WTC11 (cell line): ENCODE measurements at regions of chr5 and their contacts with region 1.

Region 1: DNA sequence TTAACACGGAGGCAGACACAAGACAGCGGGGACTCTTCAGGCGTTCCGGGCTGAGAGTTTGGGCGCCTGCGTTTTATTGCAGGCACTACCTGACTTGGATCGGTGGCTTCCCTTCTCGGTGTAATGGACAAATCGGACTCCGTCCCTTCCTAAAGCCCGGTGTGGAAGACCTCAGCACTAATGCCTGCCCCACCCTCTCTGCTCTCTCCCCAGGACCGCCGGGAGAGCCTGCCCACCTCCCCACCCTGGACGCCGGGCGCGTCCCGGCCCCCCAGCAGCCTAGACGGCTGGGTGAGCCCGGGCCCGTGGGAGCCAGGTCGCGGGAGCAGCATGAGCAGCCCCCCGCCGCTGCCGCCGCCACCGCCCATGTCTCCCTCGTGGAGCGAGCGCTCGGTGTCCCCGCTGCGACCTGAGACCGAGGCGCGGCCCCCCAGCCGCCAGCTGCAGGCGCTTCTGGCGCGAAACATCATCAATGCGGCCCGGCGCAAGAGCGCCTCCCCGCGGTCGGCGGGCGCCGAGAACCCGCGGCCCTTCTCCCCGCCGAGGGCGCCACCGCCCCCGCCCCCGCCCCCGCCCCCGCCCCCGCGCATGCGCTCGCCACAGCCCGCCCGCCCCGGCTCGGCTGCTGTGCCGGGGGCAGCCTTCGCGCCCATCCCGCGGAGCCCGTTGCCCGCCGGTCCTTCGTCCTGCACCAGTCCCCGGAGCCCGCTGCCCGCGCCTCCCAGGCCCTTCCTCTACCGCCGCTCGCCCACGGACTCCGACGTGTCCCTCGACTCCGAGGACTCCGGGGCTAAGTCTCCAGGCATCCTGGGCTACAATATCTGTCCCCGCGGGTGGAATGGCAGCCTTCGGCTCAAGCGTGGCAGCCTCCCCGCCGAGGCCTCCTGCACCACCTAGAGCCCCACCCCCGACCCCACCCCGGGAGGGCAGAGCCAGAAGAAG is 4.6 kb upstream of the MYOZ3 start:
- DNase-seq: peak; percentile 82
- ATAC-seq: peak; percentile 64
- H3K4me3 Mint-ChIP-seq: peak overlapping the region; percentile 73
- H3K27ac Mint-ChIP-seq: peak overlapping the region; percentile 76; the same call in 1 of the 2 replicates
- H3K4me1 Mint-ChIP-seq: peaks cover 27% of the 10 kb centered on the region
- H3K27me3 Mint-ChIP-seq: peaks cover 12% of the 10 kb centered on the region
- CTCF ChIP-seq: peak; percentile 55; the same call in 1 of the 2 replicates

Region 2: DNA sequence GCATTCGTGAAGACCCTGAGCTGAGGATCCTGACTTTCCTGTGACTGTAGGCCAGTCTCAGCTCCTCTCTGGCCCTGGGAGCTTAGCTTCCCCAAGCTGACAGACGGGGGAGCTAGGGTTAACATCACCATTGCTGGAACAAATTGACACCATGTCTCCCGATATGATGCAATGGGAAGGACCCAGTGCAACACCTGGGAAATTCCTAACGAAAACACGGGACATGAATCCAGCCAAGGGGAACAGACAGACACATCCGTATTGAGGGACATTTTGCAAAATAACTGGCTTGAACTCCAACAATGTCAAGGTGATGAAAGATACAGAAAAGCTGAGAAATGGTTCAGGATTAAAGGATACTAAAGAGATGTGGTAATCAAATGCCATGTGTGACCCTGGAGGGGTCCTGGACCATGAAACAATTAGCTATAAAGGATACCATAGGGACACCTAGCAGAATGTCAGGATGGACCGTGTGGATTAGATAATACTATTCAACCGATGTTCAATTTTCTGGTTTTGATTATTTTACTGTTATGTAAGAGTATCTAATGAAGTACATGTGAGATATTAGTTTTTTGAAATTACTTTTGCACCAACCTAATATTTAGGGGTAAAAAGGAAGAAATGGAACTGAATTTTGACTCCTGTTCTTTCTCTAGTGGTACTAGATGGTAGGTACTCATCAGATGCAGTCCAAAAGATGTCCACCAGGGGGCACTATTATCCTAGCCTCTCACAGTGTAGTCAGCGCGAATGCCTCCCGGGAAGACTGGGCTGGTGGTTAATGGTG is 95.9 kb before region 1 on chr5:
- CTCF ChIA-PET with region 1: interaction called, 59 read pairs
- POLR2A ChIA-PET with region 1: interaction called, 9 read pairs
- DNase-seq: peak; percentile 91
- ATAC-seq: peak; percentile 82
- H3K4me3 Mint-ChIP-seq: no peak overlapping the region
- H3K27ac Mint-ChIP-seq: peak overlapping the region; percentile 86
- H3K4me1 Mint-ChIP-seq: peaks cover 15% of the 10 kb centered on the region
- H3K27me3 Mint-ChIP-seq: no peaks in the 10 kb centered on the region
- CTCF ChIP-seq: peak; percentile 93

Region 3: GRCh38 chr5:150615141-150615699 is 41.2 kb before region 1 on chr5:
- CTCF ChIA-PET with region 1: interaction called, 11 read pairs
- POLR2A ChIA-PET with region 1: no interaction called
- DNase-seq: no peak
- ATAC-seq: no peak
- H3K4me3 Mint-ChIP-seq: no peak overlapping the region
- H3K27ac Mint-ChIP-seq: no peak overlapping the region
- H3K4me1 Mint-ChIP-seq: peaks cover 15% of the 10 kb centered on the region
- H3K27me3 Mint-ChIP-seq: no peaks in the 10 kb centered on the region
- CTCF ChIP-seq: no peak

Region 4: DNA sequence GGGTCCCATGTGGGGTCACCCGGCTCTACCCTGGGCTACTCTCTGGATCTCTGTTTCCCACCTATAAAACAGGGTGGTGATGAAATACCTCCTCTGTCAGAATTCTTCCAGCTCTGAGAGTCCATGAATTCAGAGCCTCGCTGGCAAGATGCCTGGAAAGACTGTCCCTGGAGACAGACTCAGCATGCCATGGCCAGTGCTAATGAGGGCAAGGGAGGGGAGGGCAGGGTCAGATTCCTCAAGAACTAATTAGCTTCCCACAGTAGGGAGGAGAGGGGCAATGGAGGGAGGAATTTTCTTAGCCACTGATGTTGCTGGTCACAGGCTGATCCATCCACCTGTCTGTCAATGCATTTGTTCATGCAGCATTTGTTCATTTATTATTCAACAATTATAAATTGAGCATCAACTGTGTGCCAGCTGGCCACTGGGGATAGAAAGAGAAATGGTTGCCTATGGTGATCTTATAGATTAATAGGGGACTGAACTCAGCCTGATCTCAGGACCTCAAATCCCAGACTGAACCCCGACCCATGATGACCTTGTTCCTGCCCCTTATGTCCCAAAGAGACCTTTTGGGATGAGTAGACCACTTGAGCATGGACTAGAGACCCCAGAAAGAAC is 11.3 kb before region 1 on chr5:
- CTCF ChIA-PET with region 1: interaction called, 18 read pairs
- POLR2A ChIA-PET with region 1: no interaction called
- DNase-seq: no peak
- ATAC-seq: no peak; the same call in 1 of the 2 replicates
- H3K4me3 Mint-ChIP-seq: no peak overlapping the region
- H3K27ac Mint-ChIP-seq: no peak overlapping the region
- H3K4me1 Mint-ChIP-seq: peaks cover 32% of the 10 kb centered on the region
- H3K27me3 Mint-ChIP-seq: no peaks in the 10 kb centered on the region
- CTCF ChIP-seq: no peak

Region 5: DNA sequence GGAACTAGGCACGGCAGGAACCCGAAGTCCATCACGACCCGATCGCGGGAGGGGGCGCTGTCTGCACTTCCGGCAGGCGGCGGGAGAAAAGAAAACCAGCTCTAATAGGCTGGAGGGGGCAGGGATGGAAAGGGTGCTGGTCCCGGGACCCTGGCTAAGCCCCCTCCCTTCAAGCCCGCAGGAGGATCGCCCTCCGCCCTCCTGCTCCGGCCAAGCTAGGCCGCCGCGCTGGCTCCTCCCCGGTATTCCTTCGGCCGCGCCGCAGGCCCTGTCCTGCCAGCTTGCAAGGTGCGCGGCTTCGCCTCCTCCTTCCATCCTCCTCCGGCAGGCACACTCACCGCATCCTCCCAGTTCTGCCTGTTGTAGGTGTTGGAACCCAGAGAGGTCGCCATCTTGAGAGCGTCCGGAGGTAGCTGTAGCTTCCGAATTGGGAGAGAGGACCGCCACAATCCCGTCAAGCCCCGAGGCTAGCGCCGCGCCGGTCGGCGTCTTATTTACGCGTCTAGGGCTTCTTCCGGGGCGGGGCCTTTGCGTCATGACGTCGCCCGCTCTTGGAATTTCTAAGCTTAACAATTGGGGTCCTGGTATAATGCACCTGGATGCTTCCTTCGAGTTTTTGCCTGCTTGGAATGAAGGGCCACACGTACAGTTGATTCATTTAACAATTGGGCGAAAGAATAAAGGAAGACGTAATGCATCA is 44.3 kb after region 1 on chr5 and contains the start of gene RBM22:
- CTCF ChIA-PET with region 1: interaction called, 16 read pairs
- POLR2A ChIA-PET with region 1: interaction called, 9 read pairs
- DNase-seq: peak; percentile 92
- ATAC-seq: peak; percentile 95
- H3K4me3 Mint-ChIP-seq: no peak within 1 kb of the TSS
- H3K27ac Mint-ChIP-seq: no peak within 1 kb of the TSS
- H3K4me1 Mint-ChIP-seq: peaks cover 2% of the 10 kb centered on the region; the same call in 1 of the 2 replicates
- H3K27me3 Mint-ChIP-seq: no peaks in the 10 kb centered on the region; the same call in 1 of the 2 replicates
- CTCF ChIP-seq: peak; percentile 44; the same call in 1 of the 2 replicates
- total RNA-seq, gene RBM22: 28.7 to 34.0 TPM (median 31.6 TPM) in 3 replicates